MCF 10A (cell line): ENCODE measurements at regions of chr1 and their contacts with region 1.

Region 1: GRCh38 chr1:183023601-183024316 is 539 bp downstream of the LAMC1 start:
- DNase-seq: peak; percentile 90
- H3K4me3 Mint-ChIP-seq: peak overlapping the region; percentile 93
- H3K27ac Mint-ChIP-seq: peak overlapping the region; percentile 97
- H3K4me1 Mint-ChIP-seq: peaks cover 54% of the 10 kb centered on the region
- H3K27me3 Mint-ChIP-seq: no peaks in the 10 kb centered on the region
- CTCF ChIP-seq: peak; percentile 55

Region 2: GRCh38 chr1:182962554-182963115 is 61.1 kb before region 1 on chr1:
- CTCF ChIA-PET with region 1: interaction called, 52 read pairs
- POLR2A ChIA-PET with region 1: interaction called, 113 read pairs
- intact Hi-C with region 1: loop called (anchors 1 kb)
- DNase-seq: peak; percentile 95
- H3K4me3 Mint-ChIP-seq: peak overlapping the region; percentile 63
- H3K27ac Mint-ChIP-seq: peak overlapping the region; percentile 98
- H3K4me1 Mint-ChIP-seq: peaks cover 13% of the 10 kb centered on the region
- H3K27me3 Mint-ChIP-seq: no peaks in the 10 kb centered on the region
- CTCF ChIP-seq: peak; percentile 98

Region 3: GRCh38 chr1:183058851-183059502 is 35.2 kb after region 1 on chr1:
- CTCF ChIA-PET with region 1: interaction called, 4 read pairs
- POLR2A ChIA-PET with region 1: interaction called, 46 read pairs
- intact Hi-C with region 1: loop called (anchors 5 kb)
- DNase-seq: no peak
- H3K4me3 Mint-ChIP-seq: no peak overlapping the region
- H3K27ac Mint-ChIP-seq: no peak overlapping the region
- H3K4me1 Mint-ChIP-seq: peaks cover 15% of the 10 kb centered on the region
- H3K27me3 Mint-ChIP-seq: no peaks in the 10 kb centered on the region
- CTCF ChIP-seq: no peak

Region 4: GRCh38 chr1:183086962-183087361 is 63.2 kb after region 1 on chr1:
- CTCF ChIA-PET with region 1: no interaction called
- POLR2A ChIA-PET with region 1: interaction called, 12 read pairs
- intact Hi-C with region 1: no loop called
- DNase-seq: no peak
- H3K4me3 Mint-ChIP-seq: no peak overlapping the region
- H3K27ac Mint-ChIP-seq: no peak overlapping the region
- H3K4me1 Mint-ChIP-seq: peaks cover 53% of the 10 kb centered on the region
- H3K27me3 Mint-ChIP-seq: no peaks in the 10 kb centered on the region
- CTCF ChIP-seq: no peak

Region 5: GRCh38 chr1:183180634-183181056 is 156.9 kb after region 1 on chr1:
- CTCF ChIA-PET with region 1: interaction called, 3 read pairs
- POLR2A ChIA-PET with region 1: interaction called, 12 read pairs
- intact Hi-C with region 1: no loop called
- DNase-seq: peak; percentile 87
- H3K4me3 Mint-ChIP-seq: peak overlapping the region; percentile 23
- H3K27ac Mint-ChIP-seq: peak overlapping the region; percentile 96
- H3K4me1 Mint-ChIP-seq: peaks cover 42% of the 10 kb centered on the region
- H3K27me3 Mint-ChIP-seq: no peaks in the 10 kb centered on the region
- CTCF ChIP-seq: no peak

Region 6: DNA sequence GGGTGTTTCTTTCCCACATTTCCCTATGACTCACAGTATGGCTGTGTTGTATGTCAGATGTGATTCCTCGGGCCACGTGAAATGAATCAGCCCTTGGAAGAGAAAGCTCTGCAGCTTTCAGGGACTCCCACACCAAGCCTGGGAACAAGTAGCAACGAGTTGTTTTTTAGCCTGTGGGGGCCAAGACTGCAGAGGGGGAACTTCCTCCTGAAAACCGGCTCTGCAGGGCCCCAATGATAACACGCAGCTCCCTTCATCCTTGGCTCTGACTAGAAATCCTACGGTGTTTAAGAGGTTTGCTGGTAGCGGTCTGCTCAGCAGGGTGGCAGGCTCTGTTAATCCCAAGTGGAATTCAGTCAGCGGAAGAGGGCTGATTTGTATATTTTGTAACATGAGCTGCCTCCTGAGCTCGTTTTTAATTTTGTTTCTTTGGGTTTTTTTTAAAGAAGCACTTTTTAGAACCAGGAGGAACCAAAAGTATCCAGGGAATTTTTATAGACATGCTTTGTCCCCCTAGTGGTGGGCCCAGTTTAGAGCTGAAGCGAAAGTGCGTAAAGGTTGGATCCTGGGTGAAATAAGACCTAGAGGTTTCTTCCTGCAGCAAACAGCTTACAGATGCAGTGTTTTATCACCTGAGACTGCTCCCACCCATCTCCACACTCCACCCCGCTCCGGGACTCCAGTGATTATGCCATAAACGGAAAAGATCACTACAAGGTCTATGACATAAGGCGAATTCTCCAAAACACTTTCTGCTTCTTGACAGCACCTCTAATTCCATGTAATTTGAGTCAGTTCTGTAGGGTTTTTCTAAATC is 211.1 kb after region 1 on chr1:
- CTCF ChIA-PET with region 1: interaction called, 4 read pairs
- POLR2A ChIA-PET with region 1: interaction called, 13 read pairs
- intact Hi-C with region 1: loop called (anchors 1 kb)
- DNase-seq: peak; percentile 100
- H3K4me3 Mint-ChIP-seq: peak overlapping the region; percentile 71
- H3K27ac Mint-ChIP-seq: peak overlapping the region; percentile 86
- H3K4me1 Mint-ChIP-seq: peaks cover 49% of the 10 kb centered on the region
- H3K27me3 Mint-ChIP-seq: no peaks in the 10 kb centered on the region
- CTCF ChIP-seq: peak; percentile 83